ENCODE measurements at regions of chr15 and their contacts with region 1.

Region 1: DNA sequence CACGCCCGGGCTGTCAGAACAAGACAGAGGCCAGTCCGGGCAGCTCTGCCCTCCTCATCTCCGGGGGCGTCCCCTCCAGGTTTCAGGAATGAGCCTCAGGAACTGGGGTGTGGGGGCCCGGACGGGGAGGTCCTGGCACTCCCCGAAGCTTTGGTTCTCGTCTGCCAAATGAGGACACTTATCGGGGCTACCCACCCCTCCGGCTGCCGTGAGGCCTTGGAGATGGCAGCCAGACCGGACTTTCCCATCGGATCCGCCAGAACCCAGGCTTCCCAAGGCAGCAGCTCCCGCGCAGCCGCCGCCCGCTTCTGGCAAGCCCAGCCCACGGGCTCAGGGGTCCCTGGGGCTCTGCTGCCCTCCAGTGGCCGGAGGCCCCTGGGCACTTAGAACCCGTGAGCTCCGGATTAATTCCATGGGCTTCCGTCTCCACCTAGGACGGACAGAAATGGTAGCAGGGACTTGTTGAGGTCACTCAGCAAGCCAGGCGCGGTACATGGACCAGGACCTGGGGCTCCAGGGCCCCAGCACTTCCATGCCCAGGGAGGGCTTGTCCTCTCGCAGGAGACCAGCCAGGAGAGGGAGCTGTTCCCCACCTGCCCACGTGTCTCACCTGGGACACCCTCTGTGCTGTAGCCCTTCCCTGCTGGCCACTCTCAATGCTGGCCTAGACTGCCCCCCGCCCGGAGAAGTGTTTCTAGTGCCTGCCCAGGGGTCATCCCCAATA is 89.4 kb downstream of the LINGO1 start:
- DNase-seq: peak; percentile 91 to 95
- ATAC-seq: peak; percentile 93
- H3K4me3 ChIP-seq: no peak overlapping the region
- H3K27ac ChIP-seq: no peak overlapping the region
- H3K4me1 ChIP-seq: no peaks in the 10 kb centered on the region
- H3K27me3 ChIP-seq: no peaks in the 10 kb centered on the region

Region 2: GRCh38 chr15:76939715-76940114 is 603.6 kb before region 1 on chr15:
- intact Hi-C with region 1: loop called in 1 of 2 experiments (anchors 5 kb)
- DNase-seq: no peak
- ATAC-seq: no peak
- H3K4me3 ChIP-seq: no peak overlapping the region
- H3K27ac ChIP-seq: no peak overlapping the region
- H3K4me1 ChIP-seq: no peaks in the 10 kb centered on the region
- H3K27me3 ChIP-seq: no peaks in the 10 kb centered on the region

Region 3: GRCh38 chr15:76973362-76973743 is 570.0 kb before region 1 on chr15:
- intact Hi-C with region 1: loop called in 1 of 2 experiments (anchors 2 kb)
- DNase-seq: peak; percentile 82
- ATAC-seq: peak; percentile 63
- H3K4me3 ChIP-seq: no peak overlapping the region
- H3K27ac ChIP-seq: peak overlapping the region; percentile 81 to 86
- H3K4me1 ChIP-seq: peaks cover 0 to 6% of the 10 kb centered on the region in 2 donors
- H3K27me3 ChIP-seq: no peaks in the 10 kb centered on the region

Region 4: DNA sequence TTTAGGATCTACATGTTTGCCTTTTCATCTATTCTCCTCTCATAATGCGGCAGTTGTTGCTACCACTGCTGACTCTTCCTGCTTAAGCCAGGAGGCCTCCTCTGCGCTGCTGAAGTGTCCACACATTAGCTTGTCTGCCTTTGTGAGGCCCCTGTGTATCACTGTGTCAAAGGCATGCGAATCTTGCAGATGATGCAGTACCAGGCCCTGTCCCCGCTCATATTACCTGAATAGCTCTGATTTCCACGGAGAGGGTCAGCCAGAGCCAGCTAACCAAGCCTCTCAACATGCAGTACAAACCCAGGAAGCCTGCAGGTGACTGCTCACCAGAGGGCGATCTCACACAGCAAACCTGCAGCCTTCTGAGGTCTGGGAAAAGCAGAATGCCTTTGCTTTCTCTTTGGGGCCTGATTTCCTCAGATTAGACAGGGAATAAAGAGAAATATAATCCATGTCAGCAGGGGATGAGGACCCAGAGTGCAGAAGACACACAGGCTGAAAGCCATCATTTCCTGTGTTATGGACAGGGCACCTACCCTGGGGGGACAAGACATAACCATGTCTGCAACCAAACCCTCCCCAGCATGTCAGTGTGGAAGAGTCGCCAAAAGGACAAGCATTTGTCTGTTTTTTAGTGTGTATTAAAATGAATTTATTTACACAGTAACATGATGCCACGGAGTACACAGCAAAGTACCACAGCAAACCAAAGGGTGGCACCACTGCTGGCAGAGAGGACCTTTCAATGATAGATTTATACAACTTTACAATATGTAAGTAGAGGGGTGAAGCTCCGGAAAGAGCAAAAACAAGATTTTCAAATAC is 435.6 kb before region 1 on chr15:
- intact Hi-C with region 1: loop called in 1 of 2 experiments (anchors 5 kb)
- DNase-seq: peak in 1 of 2 donors; percentile 61
- ATAC-seq: peak; percentile 70
- H3K4me3 ChIP-seq: no peak overlapping the region
- H3K27ac ChIP-seq: no peak overlapping the region
- H3K4me1 ChIP-seq: no peaks in the 10 kb centered on the region
- H3K27me3 ChIP-seq: no peaks in the 10 kb centered on the region

Region 5: GRCh38 chr15:77192451-77192850 is 350.9 kb before region 1 on chr15:
- intact Hi-C with region 1: loop called in 1 of 2 experiments (anchors 5 kb)
- DNase-seq: no peak
- ATAC-seq: no peak
- H3K4me3 ChIP-seq: no peak overlapping the region
- H3K27ac ChIP-seq: no peak overlapping the region
- H3K4me1 ChIP-seq: peaks cover 0 to 1% of the 10 kb centered on the region in 2 donors
- H3K27me3 ChIP-seq: no peaks in the 10 kb centered on the region